ENCODE measurements at regions of chr2 and their contacts with region 1.

Region 1: DNA sequence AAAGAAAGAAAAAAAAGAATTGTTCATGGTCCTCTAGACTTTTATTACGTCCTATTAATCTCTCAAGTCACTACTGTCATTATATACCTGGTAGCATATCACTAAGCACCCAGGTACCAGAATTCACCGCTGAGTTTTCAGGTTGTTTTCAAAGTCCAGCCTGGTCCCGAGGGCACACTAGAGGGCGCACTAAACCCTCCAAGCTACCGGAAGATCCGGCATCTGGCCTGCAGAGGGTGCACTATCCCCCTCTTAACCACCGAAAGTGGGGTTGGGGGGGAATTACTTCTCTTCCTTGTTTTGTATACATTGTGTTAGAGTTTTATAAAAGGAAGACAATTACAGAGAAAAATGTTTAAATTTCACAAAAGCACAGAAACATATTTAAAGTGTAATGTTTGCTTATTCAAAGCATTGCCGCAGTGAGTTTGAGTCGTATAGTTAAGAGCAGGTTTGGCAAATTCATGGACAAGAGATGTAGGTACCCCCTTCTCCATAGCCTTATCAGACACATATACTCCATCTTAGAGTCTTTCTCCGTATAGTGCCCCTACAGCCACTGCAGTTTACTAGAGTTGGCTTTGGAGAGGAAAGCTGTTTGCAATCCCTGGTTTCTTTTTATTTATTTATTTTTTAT is 19.2 kb downstream of the MOGAT1 start:
- DNase-seq: peak; percentile 77
- H3K4me3 Mint-ChIP-seq: no peak overlapping the region
- H3K27ac Mint-ChIP-seq: no peak overlapping the region
- H3K4me1 Mint-ChIP-seq: no peaks in the 10 kb centered on the region
- H3K27me3 Mint-ChIP-seq: no peaks in the 10 kb centered on the region
- CTCF ChIP-seq: peak; percentile 98

Region 2: DNA sequence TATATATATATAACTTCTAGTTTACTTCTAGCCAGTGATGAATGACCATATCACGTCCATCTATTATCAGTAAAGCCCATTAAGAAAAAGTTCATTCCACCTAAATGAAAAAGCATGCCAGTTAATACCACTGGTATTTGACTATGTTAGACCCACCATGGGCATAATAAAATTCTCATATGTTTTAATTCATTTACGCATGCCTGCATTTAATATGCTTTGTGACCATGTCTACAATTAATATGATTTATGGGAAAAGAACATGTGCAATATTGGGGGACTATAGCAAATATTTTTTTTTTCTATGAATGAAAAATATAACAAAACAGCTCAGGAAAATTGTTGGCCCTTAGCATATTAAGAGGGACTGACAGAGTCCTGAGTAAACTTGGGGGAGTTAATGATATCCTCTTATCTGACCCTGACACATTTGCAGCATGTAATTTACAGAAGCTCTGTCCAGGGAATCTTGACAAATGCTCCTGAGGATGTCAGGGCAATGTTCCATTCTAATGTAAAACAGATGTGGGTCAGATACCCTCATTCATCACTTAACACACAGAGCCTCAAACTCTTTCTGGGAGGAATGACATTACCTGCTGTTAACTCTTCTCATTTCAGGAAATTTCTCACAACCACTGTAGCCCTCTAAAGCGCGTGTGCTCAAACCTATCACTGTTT is 482.5 kb before region 1 on chr2:
- CTCF ChIA-PET with region 1: no interaction called
- POLR2A ChIA-PET with region 1: no interaction called
- intact Hi-C with region 1: no loop called
- DNase-seq: no peak
- H3K4me3 Mint-ChIP-seq: no peak overlapping the region
- H3K27ac Mint-ChIP-seq: no peak overlapping the region
- H3K4me1 Mint-ChIP-seq: no peaks in the 10 kb centered on the region
- H3K27me3 Mint-ChIP-seq: peaks cover 99% of the 10 kb centered on the region
- CTCF ChIP-seq: no peak

Region 3: GRCh38 chr2:222594679-222595078 is 96.0 kb before region 1 on chr2:
- CTCF ChIA-PET with region 1: no interaction called
- POLR2A ChIA-PET with region 1: no interaction called
- intact Hi-C with region 1: no loop called
- DNase-seq: peak; percentile 54
- H3K4me3 Mint-ChIP-seq: no peak overlapping the region
- H3K27ac Mint-ChIP-seq: peak overlapping the region; percentile 7
- H3K4me1 Mint-ChIP-seq: peaks cover 11% of the 10 kb centered on the region
- H3K27me3 Mint-ChIP-seq: no peaks in the 10 kb centered on the region
- CTCF ChIP-seq: no peak

Region 4: GRCh38 chr2:222669353-222669752 is 21.3 kb before region 1 on chr2:
- CTCF ChIA-PET with region 1: interaction called, 10 read pairs
- POLR2A ChIA-PET with region 1: no interaction called
- intact Hi-C with region 1: no loop called
- DNase-seq: no peak
- H3K4me3 Mint-ChIP-seq: no peak overlapping the region
- H3K27ac Mint-ChIP-seq: no peak overlapping the region
- H3K4me1 Mint-ChIP-seq: no peaks in the 10 kb centered on the region
- H3K27me3 Mint-ChIP-seq: peaks cover 36% of the 10 kb centered on the region
- CTCF ChIP-seq: no peak

Region 5: GRCh38 chr2:222701233-222701632 is 10.6 kb after region 1 on chr2:
- CTCF ChIA-PET with region 1: interaction called, 53 read pairs
- POLR2A ChIA-PET with region 1: interaction called, 5 read pairs
- intact Hi-C with region 1: no loop called
- DNase-seq: no peak
- H3K4me3 Mint-ChIP-seq: no peak overlapping the region
- H3K27ac Mint-ChIP-seq: no peak overlapping the region
- H3K4me1 Mint-ChIP-seq: no peaks in the 10 kb centered on the region
- H3K27me3 Mint-ChIP-seq: no peaks in the 10 kb centered on the region
- CTCF ChIP-seq: no peak

Region 6: DNA sequence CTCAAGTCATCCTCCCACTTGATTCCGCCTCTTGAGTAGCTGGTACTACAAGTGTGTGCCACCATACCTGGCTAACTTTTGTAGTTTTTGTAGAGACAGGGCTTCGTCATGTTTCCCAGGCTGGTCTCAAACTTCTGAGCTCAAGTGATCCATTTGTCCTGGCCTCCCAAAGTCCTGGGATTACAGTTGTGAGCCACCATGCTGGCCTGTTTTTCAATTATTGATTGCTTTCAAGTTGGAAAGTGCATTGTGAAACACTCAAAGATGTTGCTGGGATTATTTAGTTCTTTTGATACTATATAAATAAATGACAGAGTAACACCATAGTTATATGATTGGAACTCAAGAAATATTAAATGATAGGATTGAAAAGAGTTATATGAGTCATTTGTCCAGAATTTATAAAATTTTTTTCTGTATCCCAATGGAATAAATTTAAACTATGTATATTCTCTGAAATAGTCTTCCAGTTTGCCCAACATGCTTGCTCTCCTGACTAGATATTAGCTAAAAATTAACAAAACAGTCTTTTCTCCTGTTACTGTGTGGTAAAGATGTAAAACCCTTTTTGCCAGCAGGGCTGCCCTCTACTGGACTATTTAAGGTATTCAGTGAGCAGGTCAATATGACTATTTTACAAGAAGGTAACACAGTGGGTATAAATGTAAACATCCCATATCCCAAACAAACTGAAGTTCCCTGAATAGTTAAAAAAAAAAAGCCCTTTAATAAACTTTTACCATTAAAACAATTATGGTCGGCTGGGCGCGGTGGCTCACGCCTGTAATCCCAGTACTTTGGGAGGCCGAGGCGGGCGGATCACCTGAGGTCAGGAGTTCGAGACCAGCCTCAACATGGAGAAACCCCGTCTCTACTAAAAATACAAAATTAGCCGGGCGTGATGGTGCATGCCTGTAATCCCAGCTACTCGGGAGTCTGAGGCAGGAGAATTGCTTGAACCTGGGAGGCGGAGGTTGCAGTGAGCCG is 212.8 kb after region 1 on chr2:
- CTCF ChIA-PET with region 1: interaction called, 23 read pairs
- POLR2A ChIA-PET with region 1: interaction called, 3 read pairs
- intact Hi-C with region 1: loop called (anchors 2 kb)
- DNase-seq: peak; percentile 72
- H3K4me3 Mint-ChIP-seq: no peak overlapping the region
- H3K27ac Mint-ChIP-seq: peak overlapping the region; percentile 39
- H3K4me1 Mint-ChIP-seq: peaks cover 50% of the 10 kb centered on the region
- H3K27me3 Mint-ChIP-seq: no peaks in the 10 kb centered on the region
- CTCF ChIP-seq: peak; percentile 67

Region 7: GRCh38 chr2:222959336-222959735 is 268.7 kb after region 1 on chr2:
- CTCF ChIA-PET with region 1: interaction called, 4 read pairs
- POLR2A ChIA-PET with region 1: no interaction called
- intact Hi-C with region 1: loop called (anchors 2 kb)
- DNase-seq: peak; percentile 83
- H3K4me3 Mint-ChIP-seq: no peak overlapping the region
- H3K27ac Mint-ChIP-seq: no peak overlapping the region
- H3K4me1 Mint-ChIP-seq: peaks cover 23% of the 10 kb centered on the region
- H3K27me3 Mint-ChIP-seq: no peaks in the 10 kb centered on the region
- CTCF ChIP-seq: peak; percentile 50

Region 8: GRCh38 chr2:223197046-223197445 is 506.4 kb after region 1 on chr2:
- CTCF ChIA-PET with region 1: no interaction called
- POLR2A ChIA-PET with region 1: no interaction called
- intact Hi-C with region 1: no loop called
- DNase-seq: no peak
- H3K4me3 Mint-ChIP-seq: no peak overlapping the region
- H3K27ac Mint-ChIP-seq: no peak overlapping the region
- H3K4me1 Mint-ChIP-seq: no peaks in the 10 kb centered on the region
- H3K27me3 Mint-ChIP-seq: no peaks in the 10 kb centered on the region
- CTCF ChIP-seq: no peak